B cell (primary cell): ENCODE measurements at regions of chr12 and their contacts with region 1.

Region 1: DNA sequence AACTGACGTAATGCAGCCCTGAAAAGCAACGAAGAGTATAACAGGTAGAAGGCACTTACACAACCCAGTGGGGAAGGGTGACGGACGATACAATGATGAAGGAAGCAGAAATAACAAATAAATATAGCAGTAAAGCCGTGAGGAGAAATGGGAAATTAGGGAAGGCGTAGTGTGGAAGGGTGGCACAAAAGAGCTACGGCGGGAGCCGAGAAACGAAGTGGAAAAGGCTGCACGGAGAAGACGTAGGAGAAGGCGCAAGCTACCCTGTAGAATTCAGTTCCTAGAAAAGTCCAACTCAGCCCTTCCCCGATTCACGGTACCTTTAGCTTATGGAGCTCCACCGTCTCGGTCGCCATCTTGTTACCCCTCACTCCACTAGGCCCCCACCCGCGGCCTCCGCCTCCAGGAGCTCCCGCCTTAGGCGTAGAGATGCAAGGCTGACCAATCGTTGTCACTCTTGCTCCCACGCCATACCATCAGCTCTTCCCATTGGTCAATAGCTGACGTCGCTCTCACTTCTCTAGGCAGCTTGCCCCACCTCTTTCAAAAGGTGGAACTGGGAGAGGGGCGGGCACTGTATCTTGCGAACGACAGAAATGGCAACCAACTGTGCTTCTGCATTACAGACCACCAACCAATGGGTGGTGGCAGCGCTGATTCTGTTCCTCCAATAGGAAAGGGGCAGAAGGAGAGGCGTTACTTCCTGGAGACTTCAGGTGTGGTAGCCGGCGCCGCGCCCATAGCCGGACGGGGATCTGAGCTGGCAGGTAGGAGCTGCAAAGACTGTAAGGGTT is at the starts of genes ORMDL2 and SARNP:
- DNase-seq: peak; percentile 99
- ATAC-seq: peak; percentile 92
- H3K4me3 ChIP-seq: peak within 1 kb of the TSS; percentile 81 to 100 (median 94)
- H3K4me3 Mint-ChIP-seq: no peak within 1 kb of the TSS
- H3K27ac ChIP-seq: peak within 1 kb of the TSS; percentile 50 to 84
- H3K27ac Mint-ChIP-seq: no peak within 1 kb of the TSS
- H3K4me1 ChIP-seq: peaks cover 24 to 30% of the 10 kb centered on the region in 2 donors
- H3K4me1 Mint-ChIP-seq: peaks cover 30% of the 10 kb centered on the region
- H3K27me3 ChIP-seq: no peaks in the 10 kb centered on the region
- H3K27me3 Mint-ChIP-seq: no peaks in the 10 kb centered on the region
- CTCF ChIP-seq: no peak
- total RNA-seq, gene ORMDL2: 41.9 and 43.1 TPM in 2 replicates
- total RNA-seq, gene SARNP: 42.8 and 46.4 TPM in 2 replicates

Region 2: DNA sequence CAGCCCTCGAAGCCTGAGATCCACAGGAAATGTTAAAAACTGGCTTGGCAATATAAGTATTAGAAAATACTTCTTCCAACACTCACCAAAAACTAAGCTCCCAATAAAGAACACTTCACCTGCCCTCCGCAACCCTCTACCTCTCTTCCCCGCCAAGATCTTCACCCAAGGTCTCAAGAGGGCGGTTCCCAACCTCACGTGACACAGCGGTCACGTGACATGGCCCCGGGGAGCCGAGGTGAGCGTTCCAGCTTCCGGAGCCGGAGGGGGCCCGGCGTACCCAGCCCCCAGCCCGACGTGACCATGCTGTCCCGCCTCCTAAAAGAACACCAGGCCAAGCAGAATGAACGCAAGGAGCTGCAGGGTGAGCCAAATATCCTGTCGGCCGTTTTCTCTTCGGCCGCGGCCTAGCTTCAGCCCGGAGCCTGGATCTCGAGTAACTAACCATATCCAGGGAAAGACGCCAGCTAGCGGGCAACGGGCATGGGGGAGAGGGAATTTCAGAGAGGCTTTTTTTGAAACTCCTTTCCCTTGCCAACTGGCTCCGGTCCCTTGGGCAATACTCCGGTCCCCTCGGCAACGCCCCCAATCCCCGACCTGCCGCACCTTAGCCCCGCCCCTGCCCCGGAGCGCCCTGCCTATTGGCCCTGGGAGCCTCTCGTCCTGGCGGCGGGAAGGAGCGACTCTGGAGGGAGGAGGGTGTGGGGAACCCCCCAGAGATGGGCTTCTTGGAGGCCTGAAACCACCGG is 101.5 kb before region 1 on chr12 and contains the start of gene BLOC1S1:
- CTCF ChIA-PET with region 1: interaction called, 4 read pairs
- POLR2A ChIA-PET with region 1: interaction called, 6 read pairs
- intact Hi-C with region 1: loop called (anchors 1 kb)
- DNase-seq: peak; percentile 95
- ATAC-seq: peak; percentile 95
- H3K4me3 ChIP-seq: peak within 1 kb of the TSS; percentile 86 to 98 (median 97)
- H3K4me3 Mint-ChIP-seq: peak within 1 kb of the TSS; percentile 98
- H3K27ac ChIP-seq: peak within 1 kb of the TSS; percentile 81 to 84
- H3K27ac Mint-ChIP-seq: peak within 1 kb of the TSS; percentile 99
- H3K4me1 ChIP-seq: peaks cover 16 to 30% of the 10 kb centered on the region in 2 donors
- H3K4me1 Mint-ChIP-seq: peaks cover 38% of the 10 kb centered on the region
- H3K27me3 ChIP-seq: no peaks in the 10 kb centered on the region
- H3K27me3 Mint-ChIP-seq: no peaks in the 10 kb centered on the region
- CTCF ChIP-seq: no peak
- total RNA-seq, gene BLOC1S1: 67.1 and 71.1 TPM in 2 replicates

Region 3: GRCh38 chr12:55926738-55927587 is 109.4 kb after region 1 on chr12:
- CTCF ChIA-PET with region 1: interaction called, 23 read pairs
- POLR2A ChIA-PET with region 1: interaction called, 4 read pairs
- intact Hi-C with region 1: loop called (anchors 1 kb)
- DNase-seq: peak; percentile 94
- ATAC-seq: peak; percentile 50
- H3K4me3 ChIP-seq: peak overlapping the region; percentile 88 to 100 (median 98)
- H3K4me3 Mint-ChIP-seq: peak overlapping the region; percentile 94
- H3K27ac ChIP-seq: peak overlapping the region; percentile 67 to 92
- H3K27ac Mint-ChIP-seq: peak overlapping the region; percentile 97
- H3K4me1 ChIP-seq: peaks cover 33 to 45% of the 10 kb centered on the region in 2 donors
- H3K4me1 Mint-ChIP-seq: peaks cover 54% of the 10 kb centered on the region
- H3K27me3 ChIP-seq: no peaks in the 10 kb centered on the region
- H3K27me3 Mint-ChIP-seq: no peaks in the 10 kb centered on the region
- CTCF ChIP-seq: peak; percentile 87

Region 4: DNA sequence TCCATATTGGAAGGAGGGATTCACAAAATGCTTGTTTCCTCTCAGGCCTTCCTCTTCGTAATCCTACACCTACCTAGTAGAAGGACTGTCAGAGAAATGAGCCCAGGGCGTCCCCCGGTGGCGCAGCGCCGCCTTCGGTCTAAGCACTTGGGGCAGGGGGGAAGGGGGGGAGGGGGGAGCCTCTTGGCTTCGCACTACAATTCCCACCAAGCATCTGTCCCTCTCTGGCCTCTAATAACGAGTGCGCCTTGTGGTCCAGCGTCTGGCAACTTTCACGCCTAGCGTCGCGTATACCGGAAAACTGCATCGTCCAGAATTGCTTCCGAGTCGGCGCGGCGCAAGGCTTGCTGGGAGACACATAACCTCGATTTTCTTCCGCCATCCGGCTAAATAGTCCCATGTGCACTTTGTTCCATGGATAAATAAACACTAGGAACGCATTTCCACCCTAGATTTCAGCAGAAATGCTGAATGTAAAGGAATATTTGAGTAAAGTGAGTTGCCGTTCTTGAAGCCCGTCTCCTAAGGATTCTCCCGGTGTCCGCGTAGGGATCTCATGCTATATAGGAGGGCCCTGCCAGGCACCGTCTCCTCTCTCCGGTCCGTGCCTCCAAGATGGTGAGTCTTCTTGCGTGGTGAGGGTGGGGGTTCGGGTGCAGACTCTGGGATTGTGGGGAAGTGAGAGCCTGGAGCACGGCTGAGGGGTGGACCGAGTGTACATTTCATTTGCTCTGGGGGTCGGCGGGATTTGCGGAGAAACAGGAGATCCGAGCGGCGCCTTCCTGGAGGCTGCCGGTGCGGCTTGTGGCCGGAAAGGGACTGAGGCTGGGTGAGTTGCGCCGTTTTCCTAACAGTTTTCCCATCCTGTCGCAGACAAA is 224.2 kb after region 1 on chr12 and contains the start of gene RPS26:
- CTCF ChIA-PET with region 1: interaction called, 3 read pairs
- POLR2A ChIA-PET with region 1: no interaction called
- intact Hi-C with region 1: loop called (anchors 1 kb)
- DNase-seq: peak; percentile 99
- ATAC-seq: peak; percentile 93
- H3K4me3 ChIP-seq: peak within 1 kb of the TSS; percentile 70 to 99 (median 91)
- H3K4me3 Mint-ChIP-seq: peak within 1 kb of the TSS; percentile 98
- H3K27ac ChIP-seq: peak within 1 kb of the TSS; percentile 82 to 90
- H3K27ac Mint-ChIP-seq: peak within 1 kb of the TSS; percentile 97
- H3K4me1 ChIP-seq: peaks cover 19 to 21% of the 10 kb centered on the region in 2 donors
- H3K4me1 Mint-ChIP-seq: peaks cover 24% of the 10 kb centered on the region
- H3K27me3 ChIP-seq: no peaks in the 10 kb centered on the region
- H3K27me3 Mint-ChIP-seq: no peaks in the 10 kb centered on the region
- CTCF ChIP-seq: peak; percentile 67
- total RNA-seq, gene RPS26: 19.4 and 21.0 TPM in 2 replicates

Region 5: DNA sequence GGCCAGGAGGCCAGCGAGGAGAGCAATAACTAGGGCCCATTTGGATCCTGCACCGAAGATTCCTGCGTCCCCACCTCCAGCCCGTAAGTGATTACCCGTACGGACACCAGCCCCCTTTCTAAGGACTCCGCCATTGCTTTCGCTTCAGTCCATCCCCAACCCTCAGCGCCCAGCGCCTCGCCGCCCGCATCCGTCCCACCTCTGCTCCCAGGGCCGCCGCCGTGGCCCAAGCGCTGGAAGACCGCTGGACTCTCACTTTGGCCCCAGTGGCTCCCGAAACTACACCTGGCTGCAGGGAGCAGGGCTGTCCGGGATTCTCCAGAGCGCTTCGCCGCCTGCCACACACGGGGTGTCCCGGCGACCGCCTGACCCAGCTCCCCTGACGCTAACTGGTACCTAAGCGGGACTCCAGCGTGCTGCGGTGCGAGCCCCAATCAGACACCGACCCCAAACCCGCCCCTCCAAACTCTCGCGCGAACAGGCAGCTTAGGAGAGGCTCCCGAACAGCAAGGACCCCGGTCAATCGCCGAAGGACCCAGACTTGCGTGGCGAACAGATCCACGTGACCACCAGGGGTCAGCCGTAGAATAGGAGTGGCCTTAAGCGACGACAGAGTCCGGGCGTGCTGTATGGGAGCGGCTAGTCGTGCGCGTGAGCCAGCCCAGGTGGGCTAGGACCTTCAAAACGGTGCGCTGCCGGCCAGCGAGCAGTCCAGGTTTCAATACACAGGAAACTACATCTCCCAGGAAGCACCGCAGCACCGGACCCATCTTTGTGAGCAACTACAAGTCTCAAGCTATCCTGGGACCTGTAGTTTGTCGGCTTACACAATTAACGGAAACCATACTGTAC is 498.3 kb after region 1 on chr12 and contains the start of gene CNPY2:
- CTCF ChIA-PET with region 1: no interaction called
- POLR2A ChIA-PET with region 1: no interaction called
- intact Hi-C with region 1: loop called (anchors 1 kb)
- DNase-seq: peak; percentile 99
- ATAC-seq: peak; percentile 86
- H3K4me3 ChIP-seq: peak within 1 kb of the TSS; percentile 78 to 94 (median 91)
- H3K4me3 Mint-ChIP-seq: peak within 1 kb of the TSS; percentile 99
- H3K27ac ChIP-seq: peak within 1 kb of the TSS; percentile 67 to 90
- H3K27ac Mint-ChIP-seq: peak within 1 kb of the TSS; percentile 99
- H3K4me1 ChIP-seq: peaks cover 12 to 15% of the 10 kb centered on the region in 2 donors
- H3K4me1 Mint-ChIP-seq: peaks cover 10% of the 10 kb centered on the region
- H3K27me3 ChIP-seq: no peaks in the 10 kb centered on the region
- H3K27me3 Mint-ChIP-seq: no peaks in the 10 kb centered on the region
- CTCF ChIP-seq: no peak
- total RNA-seq, gene CNPY2: 89.0 and 91.2 TPM in 2 replicates